ENCODE measurements at regions of chr2 and their contacts with region 1.

Region 1: GRCh38 chr2:237459741-237460174 is 27.3 kb upstream of the MLPH start:
- DNase-seq: no peak
- ATAC-seq: no peak
- H3K4me3 ChIP-seq: no peak overlapping the region
- H3K4me3 Mint-ChIP-seq: no peak overlapping the region
- H3K27ac ChIP-seq: no peak overlapping the region
- H3K27ac Mint-ChIP-seq: no peak overlapping the region
- H3K4me1 ChIP-seq: peaks cover 0 to 8% of the 10 kb centered on the region in 2 donors
- H3K4me1 Mint-ChIP-seq: peaks cover 9 to 24% (median 13%) of the 10 kb centered on the region in 7 donors
- H3K27me3 ChIP-seq: no peaks in the 10 kb centered on the region
- H3K27me3 Mint-ChIP-seq: no peaks in the 10 kb centered on the region

Region 2: DNA sequence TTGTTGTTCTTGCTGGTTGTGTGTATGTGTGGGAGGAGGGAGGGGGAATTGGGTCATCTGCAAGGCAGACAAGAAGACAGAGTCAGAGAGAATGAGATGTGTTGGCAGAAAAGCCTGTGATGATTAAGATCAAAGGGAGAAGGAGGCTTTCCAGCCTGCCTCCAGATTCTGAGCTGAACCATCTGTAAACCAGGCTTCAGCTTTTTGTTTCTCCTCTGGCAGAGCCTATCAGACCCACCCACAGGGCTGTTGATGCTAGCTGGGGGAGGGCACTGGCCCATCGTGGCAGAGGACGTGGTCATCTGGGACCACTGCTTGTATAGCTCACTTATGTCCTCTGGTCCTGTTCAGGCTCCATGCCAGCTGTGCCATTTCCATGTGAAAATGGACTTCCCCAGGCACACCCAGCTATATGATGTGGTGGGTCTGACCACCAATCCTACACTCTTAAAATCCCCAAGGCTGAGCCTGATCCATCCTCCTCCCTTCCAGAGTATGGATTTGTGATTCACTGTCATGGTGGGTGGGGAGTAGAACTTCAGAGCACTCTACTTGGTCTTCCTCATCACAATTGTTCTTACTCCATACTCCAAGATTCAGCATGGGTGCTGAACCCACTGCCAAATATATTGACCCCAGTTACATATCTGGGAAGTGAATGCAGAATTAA is 18.0 kb before region 1 on chr2:
- CTCF ChIA-PET with region 1: interaction called, 3 read pairs
- POLR2A ChIA-PET with region 1: interaction called, 7 read pairs
- intact Hi-C with region 1: loop called in 1 of 2 experiments (anchors 2 kb)
- DNase-seq: peak in 8 of 9 donors; percentile 46 to 70 (median 61)
- ATAC-seq: peak; percentile 88
- H3K4me3 ChIP-seq: no peak overlapping the region
- H3K4me3 Mint-ChIP-seq: peak overlapping the region; percentile 40 to 71 (median 56)
- H3K27ac ChIP-seq: peak overlapping the region; percentile 40
- H3K27ac Mint-ChIP-seq: peak overlapping the region; percentile 51 to 87 (median 79)
- H3K4me1 ChIP-seq: peaks cover 10 to 48% of the 10 kb centered on the region in 2 donors
- H3K4me1 Mint-ChIP-seq: peaks cover 36 to 79% (median 71%) of the 10 kb centered on the region in 7 donors
- H3K27me3 ChIP-seq: no peaks in the 10 kb centered on the region
- H3K27me3 Mint-ChIP-seq: no peaks in the 10 kb centered on the region

Region 3: DNA sequence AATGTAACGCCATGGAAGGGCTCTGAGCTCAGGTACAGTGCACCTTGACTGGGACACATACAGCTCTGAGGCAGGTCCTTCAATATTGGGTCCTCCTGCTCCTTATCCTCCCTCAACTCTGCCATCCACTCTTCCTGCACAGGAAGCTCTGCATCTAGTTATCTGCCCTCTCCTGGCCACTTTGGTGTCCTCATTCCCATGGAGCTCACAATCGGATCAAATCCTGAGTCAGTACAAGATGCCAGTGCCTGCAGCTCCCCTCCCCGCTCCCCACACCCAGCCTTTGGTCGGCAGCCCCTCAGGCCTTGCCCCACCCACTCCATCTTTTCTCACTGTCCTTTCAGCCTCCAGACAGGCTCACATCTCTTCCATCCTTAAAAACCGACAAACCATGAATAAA is 225.7 kb after region 1 on chr2:
- CTCF ChIA-PET with region 1: no interaction called
- POLR2A ChIA-PET with region 1: no interaction called
- intact Hi-C with region 1: no loop called
- DNase-seq: no peak
- ATAC-seq: no peak
- H3K4me3 ChIP-seq: no peak overlapping the region
- H3K4me3 Mint-ChIP-seq: no peak overlapping the region
- H3K27ac ChIP-seq: no peak overlapping the region
- H3K27ac Mint-ChIP-seq: peak overlapping the region in 8 of 9 donors; percentile 55 to 100 (median 98)
- H3K4me1 ChIP-seq: peaks cover 29 to 39% of the 10 kb centered on the region in 2 donors
- H3K4me1 Mint-ChIP-seq: peaks cover 28 to 62% (median 49%) of the 10 kb centered on the region in 7 donors
- H3K27me3 ChIP-seq: no peaks in the 10 kb centered on the region
- H3K27me3 Mint-ChIP-seq: no peaks in the 10 kb centered on the region